ENCODE measurements at regions of chr6 and their contacts with region 1.

Region 1: DNA sequence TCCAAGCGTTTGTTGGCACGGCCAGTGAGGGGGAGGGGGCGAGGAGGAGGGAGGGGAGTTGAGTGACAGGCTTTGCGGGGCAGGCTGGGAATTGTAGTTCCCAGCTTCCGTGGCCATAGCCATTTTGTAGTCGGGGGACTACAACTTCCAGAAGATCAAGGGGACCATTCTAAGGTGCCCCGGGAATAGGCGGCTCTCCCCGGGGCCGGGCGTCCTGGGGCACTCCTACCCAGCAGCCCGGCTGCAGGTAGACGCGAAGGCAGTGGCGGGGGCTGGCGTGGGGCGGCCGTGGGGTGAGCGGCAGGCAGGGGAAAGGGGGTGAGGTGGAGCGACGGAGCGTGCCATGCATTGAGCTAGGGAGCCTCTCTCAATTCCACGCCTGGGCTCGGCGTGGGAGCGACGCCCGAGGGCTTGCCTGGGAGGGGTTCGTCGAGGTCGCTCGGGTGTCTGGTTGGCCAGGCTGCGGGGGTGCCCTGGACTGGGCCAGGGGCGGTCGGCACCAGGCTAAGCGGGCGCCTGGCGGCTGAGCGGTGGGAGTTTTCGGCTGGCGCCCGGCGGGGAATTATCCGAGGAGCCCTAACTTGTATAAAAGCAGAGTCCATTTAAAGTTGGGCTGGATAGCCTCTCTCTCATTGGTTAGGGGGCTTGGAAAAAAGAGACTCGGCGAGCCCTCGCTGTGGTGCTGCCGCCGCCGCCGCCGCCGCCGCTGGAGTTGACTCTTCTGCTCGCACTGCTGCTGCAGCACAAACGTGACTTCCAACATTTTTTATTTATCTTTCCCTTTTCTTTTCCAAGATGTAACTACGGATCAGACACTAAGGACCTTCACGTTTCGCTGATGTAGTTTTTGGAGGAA is at the start of gene JARID2:
- DNase-seq: peak; percentile 89 to 97 (median 94)
- ATAC-seq: peak; percentile 41
- H3K4me3 ChIP-seq: peak within 1 kb of the TSS; percentile 92 to 99
- H3K4me3 Mint-ChIP-seq: peak within 1 kb of the TSS; percentile 97
- H3K27ac ChIP-seq: peak within 1 kb of the TSS; percentile 83 to 89
- H3K27ac Mint-ChIP-seq: peak within 1 kb of the TSS; percentile 96
- H3K4me1 ChIP-seq: peaks cover 19% of the 10 kb centered on the region
- H3K4me1 Mint-ChIP-seq: peaks cover 28% of the 10 kb centered on the region
- H3K27me3 ChIP-seq: no peaks in the 10 kb centered on the region
- H3K27me3 Mint-ChIP-seq: no peaks in the 10 kb centered on the region
- CTCF ChIP-seq: no peak
- total RNA-seq, gene JARID2: 30.6 to 31.2 TPM

Region 2: DNA sequence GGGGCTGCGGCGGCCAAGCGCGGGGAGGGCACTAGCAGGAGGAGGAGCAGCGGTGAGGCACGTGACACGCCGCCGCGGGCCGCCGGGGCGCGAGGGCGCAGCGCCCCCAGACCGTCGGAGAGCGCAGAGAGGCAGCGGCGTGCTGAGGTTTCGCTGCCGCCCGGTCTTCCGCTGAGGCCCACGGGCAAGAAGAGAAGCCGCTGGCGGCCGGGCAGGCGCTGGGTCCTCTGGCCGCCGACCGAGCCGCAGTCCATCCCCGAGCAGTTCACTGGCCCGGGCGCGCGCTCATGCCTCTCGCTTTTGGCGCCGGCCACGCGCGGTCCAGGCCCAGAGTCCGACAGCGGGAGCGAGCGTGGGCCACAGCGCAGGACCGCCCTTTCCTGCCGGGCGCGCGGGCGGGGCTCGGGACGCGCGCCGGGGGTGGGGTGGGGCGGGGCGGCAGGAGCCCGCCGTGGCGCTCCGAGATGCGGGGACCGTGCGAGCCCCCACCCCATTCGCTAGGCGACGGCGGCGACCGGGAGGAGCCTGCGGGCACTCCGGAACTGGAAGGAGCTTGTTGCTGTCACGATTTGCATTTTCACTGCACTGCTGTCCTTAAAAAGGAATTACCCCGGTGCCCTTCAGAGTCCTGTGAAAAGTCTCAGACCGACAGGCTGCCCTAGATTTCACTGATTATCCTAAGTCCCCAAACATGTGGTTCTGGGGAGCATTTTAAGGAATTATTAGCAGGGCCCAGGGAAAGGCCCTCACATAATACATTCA is 1431.2 kb before region 1 on chr6 and contains the start of gene MCUR1:
- CTCF ChIA-PET with region 1: no interaction called
- POLR2A ChIA-PET with region 1: no interaction called
- intact Hi-C with region 1: loop called in 1 of 2 experiments (anchors 5 kb)
- DNase-seq: peak; percentile 51 to 92 (median 74)
- ATAC-seq: peak; percentile 80
- H3K4me3 ChIP-seq: peak within 1 kb of the TSS; percentile 71
- H3K4me3 Mint-ChIP-seq: peak within 1 kb of the TSS; percentile 87
- H3K27ac ChIP-seq: peak within 1 kb of the TSS; percentile 61 to 76
- H3K27ac Mint-ChIP-seq: peak within 1 kb of the TSS; percentile 85
- H3K4me1 ChIP-seq: peaks cover 14% of the 10 kb centered on the region
- H3K4me1 Mint-ChIP-seq: peaks cover 34% of the 10 kb centered on the region
- H3K27me3 ChIP-seq: no peaks in the 10 kb centered on the region
- H3K27me3 Mint-ChIP-seq: no peaks in the 10 kb centered on the region
- CTCF ChIP-seq: no peak
- total RNA-seq, gene MCUR1: 2.1 to 3.4 TPM

Region 3: DNA sequence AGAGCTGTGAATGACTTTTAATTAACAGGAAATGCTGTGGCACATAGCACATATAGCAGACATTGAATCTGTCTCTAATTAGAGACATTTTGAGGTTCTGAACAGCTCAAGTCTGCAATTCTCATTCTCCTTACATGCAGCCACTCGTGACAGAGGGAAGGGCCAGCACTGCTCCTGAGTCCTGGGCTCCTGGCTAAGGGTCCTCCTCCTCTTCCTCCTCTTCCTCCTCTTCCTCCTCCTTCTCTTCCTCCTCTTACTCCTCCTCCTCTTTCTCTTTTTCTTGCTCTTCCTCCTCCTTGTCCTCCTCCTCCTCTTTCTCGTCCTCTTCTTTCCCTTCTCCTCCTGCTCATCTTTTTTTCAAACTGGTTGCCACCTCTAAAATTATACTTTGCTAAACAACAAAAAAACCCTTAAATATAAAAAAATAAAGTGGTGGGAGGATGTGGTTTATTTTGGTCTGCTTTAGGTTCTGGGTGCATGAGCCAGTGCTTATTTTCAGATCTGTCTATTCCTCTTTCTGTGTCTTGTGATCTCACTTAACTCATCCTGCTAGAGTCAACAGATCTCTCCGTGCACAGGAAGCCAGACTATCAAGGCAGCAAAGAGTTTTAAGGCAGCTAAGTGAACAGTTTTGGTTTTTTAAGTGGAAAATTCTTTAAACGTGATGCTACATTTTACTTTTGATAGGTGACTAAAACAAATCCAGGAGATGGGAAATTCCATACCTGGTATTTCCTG is 968.8 kb before region 1 on chr6:
- CTCF ChIA-PET with region 1: no interaction called
- POLR2A ChIA-PET with region 1: no interaction called
- intact Hi-C with region 1: loop called (anchors 5 to 10 kb)
- DNase-seq: peak in 5 of 9 experiments; percentile 18 to 82 (median 54)
- ATAC-seq: peak; percentile 98
- H3K4me3 ChIP-seq: peak overlapping the region in 1 of 2 experiments; percentile 4
- H3K4me3 Mint-ChIP-seq: peak overlapping the region; percentile 76
- H3K27ac ChIP-seq: peak overlapping the region; percentile 1 to 53
- H3K27ac Mint-ChIP-seq: peak overlapping the region; percentile 95
- H3K4me1 ChIP-seq: peaks cover 38% of the 10 kb centered on the region
- H3K4me1 Mint-ChIP-seq: peaks cover 48% of the 10 kb centered on the region
- H3K27me3 ChIP-seq: no peaks in the 10 kb centered on the region
- H3K27me3 Mint-ChIP-seq: no peaks in the 10 kb centered on the region
- CTCF ChIP-seq: no peak

Region 4: GRCh38 chr6:15299430-15300131 is 54.0 kb after region 1 on chr6:
- CTCF ChIA-PET with region 1: interaction called, 4 read pairs
- POLR2A ChIA-PET with region 1: interaction called, 3 read pairs
- intact Hi-C with region 1: loop called in 1 of 2 experiments (anchors 5 kb)
- DNase-seq: peak; percentile 8 to 71 (median 57)
- ATAC-seq: peak; percentile 72
- H3K4me3 ChIP-seq: peak overlapping the region in 1 of 2 experiments; percentile 10
- H3K4me3 Mint-ChIP-seq: peak overlapping the region; percentile 41
- H3K27ac ChIP-seq: peak overlapping the region in 1 of 2 experiments; percentile 81
- H3K27ac Mint-ChIP-seq: peak overlapping the region; percentile 73
- H3K4me1 ChIP-seq: peaks cover 40% of the 10 kb centered on the region
- H3K4me1 Mint-ChIP-seq: peaks cover 74% of the 10 kb centered on the region
- H3K27me3 ChIP-seq: no peaks in the 10 kb centered on the region
- H3K27me3 Mint-ChIP-seq: no peaks in the 10 kb centered on the region
- CTCF ChIP-seq: no peak

Region 5: DNA sequence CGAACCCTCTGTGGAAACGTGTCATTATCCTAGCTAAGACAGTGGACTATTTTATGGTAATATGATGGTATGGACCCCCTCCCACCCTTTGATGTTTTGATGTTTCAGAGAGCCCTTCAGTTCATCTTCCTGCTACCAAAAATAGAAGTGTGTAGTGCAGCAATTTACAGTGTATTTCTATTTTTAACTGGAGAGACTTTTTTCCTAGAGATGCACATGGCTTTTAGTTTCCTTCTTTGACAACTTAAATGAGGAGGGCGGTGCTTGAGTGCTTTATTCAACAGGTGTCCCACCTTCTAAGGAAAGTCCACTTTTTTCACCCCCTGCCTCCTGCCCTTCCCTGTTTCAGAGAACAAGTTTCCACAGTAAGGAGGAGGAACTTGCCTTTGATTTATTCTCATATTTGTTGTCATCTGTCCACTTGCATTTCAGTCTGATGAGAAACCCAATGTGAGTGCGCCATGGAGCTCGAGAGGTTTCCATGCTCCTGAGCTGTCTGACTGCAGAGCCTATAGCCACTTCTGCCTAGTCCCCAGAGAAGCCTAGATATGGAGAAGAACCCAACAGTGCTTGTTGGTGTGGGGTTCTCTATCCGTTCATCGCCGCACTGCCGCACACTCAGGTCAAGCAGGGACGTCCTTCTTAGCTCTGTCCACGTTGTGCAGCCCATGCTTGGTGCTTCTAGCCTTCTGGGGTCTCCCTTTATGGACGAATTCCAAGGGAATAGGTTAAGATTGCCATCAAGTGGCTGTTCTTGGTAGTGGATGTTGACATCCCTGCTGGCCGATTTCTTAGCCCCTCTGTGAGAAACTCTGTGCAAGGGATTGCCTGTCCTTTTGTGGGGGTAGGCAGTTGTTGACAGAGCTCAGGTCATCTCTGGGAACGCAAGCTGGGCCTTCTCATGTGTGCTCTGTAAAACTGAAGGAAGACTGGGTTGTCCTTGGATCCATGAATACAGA is 144.5 kb after region 1 on chr6:
- CTCF ChIA-PET with region 1: interaction called, 5 read pairs
- POLR2A ChIA-PET with region 1: no interaction called
- intact Hi-C with region 1: loop called in 1 of 2 experiments (anchors 5 kb)
- DNase-seq: peak in 4 of 9 experiments; percentile 25 to 61 (median 38)
- ATAC-seq: peak; percentile 63
- H3K4me3 ChIP-seq: no peak overlapping the region
- H3K4me3 Mint-ChIP-seq: peak overlapping the region; percentile 3
- H3K27ac ChIP-seq: no peak overlapping the region
- H3K27ac Mint-ChIP-seq: no peak overlapping the region
- H3K4me1 ChIP-seq: peaks cover 27% of the 10 kb centered on the region
- H3K4me1 Mint-ChIP-seq: peaks cover 67% of the 10 kb centered on the region
- H3K27me3 ChIP-seq: no peaks in the 10 kb centered on the region
- H3K27me3 Mint-ChIP-seq: no peaks in the 10 kb centered on the region
- CTCF ChIP-seq: peak; percentile 65

Region 6: GRCh38 chr6:15662326-15663129 is 416.9 kb after region 1 on chr6 and contains the start of gene DTNBP1:
- CTCF ChIA-PET with region 1: no interaction called
- POLR2A ChIA-PET with region 1: no interaction called
- intact Hi-C with region 1: loop called in 1 of 2 experiments (anchors 5 kb)
- DNase-seq: peak; percentile 58 to 90 (median 82)
- ATAC-seq: peak; percentile 73
- H3K4me3 ChIP-seq: peak within 1 kb of the TSS; percentile 67 to 76
- H3K4me3 Mint-ChIP-seq: peak within 1 kb of the TSS; percentile 83
- H3K27ac ChIP-seq: peak within 1 kb of the TSS; percentile 55 to 73
- H3K27ac Mint-ChIP-seq: peak within 1 kb of the TSS; percentile 73
- H3K4me1 ChIP-seq: peaks cover 7% of the 10 kb centered on the region
- H3K4me1 Mint-ChIP-seq: peaks cover 41% of the 10 kb centered on the region
- H3K27me3 ChIP-seq: no peaks in the 10 kb centered on the region
- H3K27me3 Mint-ChIP-seq: peaks cover 2% of the 10 kb centered on the region
- CTCF ChIP-seq: no peak
- total RNA-seq, gene DTNBP1: 12.3 to 12.6 TPM

Region 7: DNA sequence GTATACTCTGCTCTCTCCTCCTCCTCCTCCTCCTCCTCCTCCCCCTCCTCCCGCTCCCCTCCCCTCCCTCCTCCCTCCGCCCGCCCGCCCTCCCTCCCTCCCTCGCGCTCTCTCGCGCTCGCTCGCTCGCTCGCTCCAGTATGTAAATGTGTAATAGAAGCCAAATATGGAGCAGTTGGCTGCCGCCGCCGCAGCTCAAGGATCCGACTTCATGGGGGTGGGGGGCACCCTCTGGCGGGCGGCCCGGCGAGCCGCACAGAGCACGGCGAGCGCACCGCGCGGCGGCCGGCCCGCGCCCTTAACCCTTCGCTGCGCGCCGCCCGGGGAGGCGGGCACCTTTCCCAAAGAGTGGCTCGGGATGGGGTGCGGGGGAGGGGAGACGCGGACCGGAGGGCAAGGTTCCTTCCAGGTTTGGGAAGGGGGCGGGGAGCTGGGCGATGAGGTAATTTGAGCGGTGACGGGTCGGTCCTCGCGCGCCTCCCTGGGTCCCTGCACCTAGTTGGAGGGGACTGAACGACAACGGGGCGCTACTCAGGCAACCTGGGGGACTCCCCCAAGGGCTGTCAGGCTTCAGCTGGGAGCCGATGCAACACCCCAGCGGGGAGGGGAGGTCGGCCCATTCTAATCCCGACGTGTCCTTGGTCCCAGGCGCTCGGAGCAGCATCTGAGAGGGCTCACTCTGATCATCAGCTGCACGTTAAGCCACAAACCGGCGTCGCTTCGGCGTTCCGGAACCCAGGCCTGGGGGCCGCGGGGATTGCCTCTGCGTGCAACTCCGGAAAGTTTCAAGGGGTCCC is 1516.1 kb after region 1 on chr6:
- CTCF ChIA-PET with region 1: no interaction called
- POLR2A ChIA-PET with region 1: no interaction called
- intact Hi-C with region 1: loop called in 1 of 2 experiments (anchors 5 kb)
- DNase-seq: peak; percentile 72 to 93 (median 83)
- ATAC-seq: peak; percentile 56
- H3K4me3 ChIP-seq: peak overlapping the region; percentile 76 to 79
- H3K4me3 Mint-ChIP-seq: peak overlapping the region; percentile 97
- H3K27ac ChIP-seq: peak overlapping the region; percentile 93 to 96
- H3K27ac Mint-ChIP-seq: peak overlapping the region; percentile 99
- H3K4me1 ChIP-seq: peaks cover 30% of the 10 kb centered on the region
- H3K4me1 Mint-ChIP-seq: peaks cover 61% of the 10 kb centered on the region
- H3K27me3 ChIP-seq: no peaks in the 10 kb centered on the region
- H3K27me3 Mint-ChIP-seq: no peaks in the 10 kb centered on the region
- CTCF ChIP-seq: no peak